ENCODE measurements at regions of chr19 and their contacts with region 1.

Region 1: GRCh38 chr19:40465557-40466150 is at the start of gene BLVRB:
- DNase-seq: peak; percentile 98 to 99 (median 99)
- H3K4me3 ChIP-seq: peak within 1 kb of the TSS; percentile 67 to 72
- H3K4me3 Mint-ChIP-seq: peak within 1 kb of the TSS; percentile 85 to 96 (median 86)
- H3K27ac ChIP-seq: peak within 1 kb of the TSS; percentile 52
- H3K27ac Mint-ChIP-seq: peak within 1 kb of the TSS; percentile 79 to 98 (median 95)
- H3K4me1 ChIP-seq: peaks cover 28% of the 10 kb centered on the region
- H3K4me1 Mint-ChIP-seq: peaks cover 22 to 31% (median 24%) of the 10 kb centered on the region in 4 donors
- H3K27me3 ChIP-seq: no peaks in the 10 kb centered on the region
- H3K27me3 Mint-ChIP-seq: peaks cover 6 to 20% of the 10 kb centered on the region in 2 donors
- total RNA-seq, gene BLVRB: 12.3 to 16.3 TPM

Region 2: DNA sequence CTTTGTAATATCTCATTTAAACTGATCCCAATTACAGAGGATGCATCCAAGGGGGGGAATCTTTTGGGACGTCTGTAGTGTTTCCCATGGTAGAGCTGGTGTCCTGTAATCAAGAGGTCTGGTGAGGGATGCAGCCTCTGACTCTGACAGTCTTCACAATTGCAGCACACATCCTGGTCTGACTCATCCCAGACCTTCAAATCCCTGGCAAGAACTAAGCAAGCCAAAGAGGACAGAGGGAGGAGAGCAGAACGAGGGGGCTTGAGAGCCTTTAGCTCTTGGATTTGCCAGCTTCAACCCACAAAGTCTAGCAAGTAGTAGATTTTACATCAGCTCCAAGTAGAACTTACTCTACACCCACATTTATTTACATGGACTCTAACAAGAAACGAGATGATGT is 514.0 kb before region 1 on chr19:
- CTCF ChIA-PET with region 1: no interaction called
- POLR2A ChIA-PET with region 1: no interaction called
- intact Hi-C with region 1: no loop called
- DNase-seq: no peak
- H3K4me3 ChIP-seq: peak overlapping the region in 1 of 2 donors; percentile 23
- H3K4me3 Mint-ChIP-seq: peak overlapping the region in 7 of 8 donors; percentile 65 to 93 (median 91)
- H3K27ac ChIP-seq: peak overlapping the region; percentile 57
- H3K27ac Mint-ChIP-seq: peak overlapping the region; percentile 88 to 99 (median 97)
- H3K4me1 ChIP-seq: peaks cover 83% of the 10 kb centered on the region
- H3K4me1 Mint-ChIP-seq: peaks cover 50 to 93% (median 69%) of the 10 kb centered on the region in 4 donors
- H3K27me3 ChIP-seq: no peaks in the 10 kb centered on the region
- H3K27me3 Mint-ChIP-seq: no peaks in the 10 kb centered on the region

Region 3: DNA sequence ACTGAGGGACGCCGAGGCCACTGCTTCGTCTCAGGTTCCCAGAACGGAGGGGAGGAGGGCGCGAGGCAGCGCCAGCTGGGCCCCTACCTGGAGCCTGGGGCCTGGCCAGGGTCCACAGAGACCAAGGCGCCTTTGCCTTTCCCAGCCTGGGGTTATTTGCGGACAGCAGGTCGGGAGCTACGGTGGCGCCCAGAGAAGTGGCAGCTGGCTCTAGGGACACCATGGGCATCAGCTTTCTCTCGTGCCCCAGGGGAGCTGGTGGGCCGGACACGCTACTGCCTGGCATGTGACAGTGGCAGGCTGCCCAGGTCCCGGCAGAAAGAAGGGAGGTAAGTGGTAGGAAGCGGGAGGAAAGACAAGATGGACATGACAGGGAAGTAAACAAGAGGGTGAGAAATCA is 199.5 kb before region 1 on chr19:
- CTCF ChIA-PET with region 1: no interaction called
- POLR2A ChIA-PET with region 1: no interaction called
- intact Hi-C with region 1: no loop called
- DNase-seq: no peak
- H3K4me3 ChIP-seq: no peak overlapping the region
- H3K4me3 Mint-ChIP-seq: no peak overlapping the region
- H3K27ac ChIP-seq: no peak overlapping the region
- H3K27ac Mint-ChIP-seq: no peak overlapping the region
- H3K4me1 ChIP-seq: no peaks in the 10 kb centered on the region
- H3K4me1 Mint-ChIP-seq: peaks cover 14 to 48% (median 27%) of the 10 kb centered on the region in 4 donors
- H3K27me3 ChIP-seq: no peaks in the 10 kb centered on the region
- H3K27me3 Mint-ChIP-seq: no peaks in the 10 kb centered on the region

Region 4: GRCh38 chr19:40403262-40403984 is 62.2 kb before region 1 on chr19:
- CTCF ChIA-PET with region 1: interaction called, 6 read pairs
- POLR2A ChIA-PET with region 1: interaction called, 17 read pairs
- intact Hi-C with region 1: loop called (anchors 5 kb)
- DNase-seq: peak; percentile 61 to 80 (median 64)
- H3K4me3 ChIP-seq: peak overlapping the region; percentile 59 to 69
- H3K4me3 Mint-ChIP-seq: peak overlapping the region; percentile 86 to 99 (median 96)
- H3K27ac ChIP-seq: peak overlapping the region; percentile 43
- H3K27ac Mint-ChIP-seq: peak overlapping the region; percentile 46 to 95 (median 90)
- H3K4me1 ChIP-seq: peaks cover 18% of the 10 kb centered on the region
- H3K4me1 Mint-ChIP-seq: peaks cover 22 to 38% (median 29%) of the 10 kb centered on the region in 4 donors
- H3K27me3 ChIP-seq: no peaks in the 10 kb centered on the region
- H3K27me3 Mint-ChIP-seq: no peaks in the 10 kb centered on the region

Region 5: GRCh38 chr19:40444192-40445028 is 21.2 kb before region 1 on chr19 and contains the start of gene SERTAD3:
- CTCF ChIA-PET with region 1: interaction called, 21 read pairs
- POLR2A ChIA-PET with region 1: interaction called, 51 read pairs
- intact Hi-C with region 1: loop called (anchors 1 kb)
- DNase-seq: peak; percentile 96 to 99 (median 97)
- H3K4me3 ChIP-seq: peak within 1 kb of the TSS; percentile 96 to 100
- H3K4me3 Mint-ChIP-seq: peak within 1 kb of the TSS; percentile 96 to 100 (median 100)
- H3K27ac ChIP-seq: peak within 1 kb of the TSS; percentile 75
- H3K27ac Mint-ChIP-seq: peak within 1 kb of the TSS; percentile 85 to 100 (median 99)
- H3K4me1 ChIP-seq: peaks cover 11% of the 10 kb centered on the region
- H3K4me1 Mint-ChIP-seq: peaks cover 11 to 22% (median 18%) of the 10 kb centered on the region in 4 donors
- H3K27me3 ChIP-seq: no peaks in the 10 kb centered on the region
- H3K27me3 Mint-ChIP-seq: no peaks in the 10 kb centered on the region
- total RNA-seq, gene SERTAD3: 17.8 to 19.4 TPM

Region 6: GRCh38 chr19:40529093-40529954 is 63.7 kb after region 1 on chr19:
- CTCF ChIA-PET with region 1: no interaction called
- POLR2A ChIA-PET with region 1: no interaction called
- intact Hi-C with region 1: loop called (anchors 2 kb)
- DNase-seq: peak; percentile 88 to 90 (median 89)
- H3K4me3 ChIP-seq: peak overlapping the region in 1 of 2 donors; percentile 54
- H3K4me3 Mint-ChIP-seq: peak overlapping the region; percentile 65 to 87 (median 78)
- H3K27ac ChIP-seq: no peak overlapping the region
- H3K27ac Mint-ChIP-seq: peak overlapping the region; percentile 53 to 93 (median 77)
- H3K4me1 ChIP-seq: peaks cover 14% of the 10 kb centered on the region
- H3K4me1 Mint-ChIP-seq: peaks cover 9 to 26% (median 15%) of the 10 kb centered on the region in 4 donors
- H3K27me3 ChIP-seq: peaks cover 9% of the 10 kb centered on the region
- H3K27me3 Mint-ChIP-seq: peaks cover 18 to 30% of the 10 kb centered on the region in 2 donors

Region 7: DNA sequence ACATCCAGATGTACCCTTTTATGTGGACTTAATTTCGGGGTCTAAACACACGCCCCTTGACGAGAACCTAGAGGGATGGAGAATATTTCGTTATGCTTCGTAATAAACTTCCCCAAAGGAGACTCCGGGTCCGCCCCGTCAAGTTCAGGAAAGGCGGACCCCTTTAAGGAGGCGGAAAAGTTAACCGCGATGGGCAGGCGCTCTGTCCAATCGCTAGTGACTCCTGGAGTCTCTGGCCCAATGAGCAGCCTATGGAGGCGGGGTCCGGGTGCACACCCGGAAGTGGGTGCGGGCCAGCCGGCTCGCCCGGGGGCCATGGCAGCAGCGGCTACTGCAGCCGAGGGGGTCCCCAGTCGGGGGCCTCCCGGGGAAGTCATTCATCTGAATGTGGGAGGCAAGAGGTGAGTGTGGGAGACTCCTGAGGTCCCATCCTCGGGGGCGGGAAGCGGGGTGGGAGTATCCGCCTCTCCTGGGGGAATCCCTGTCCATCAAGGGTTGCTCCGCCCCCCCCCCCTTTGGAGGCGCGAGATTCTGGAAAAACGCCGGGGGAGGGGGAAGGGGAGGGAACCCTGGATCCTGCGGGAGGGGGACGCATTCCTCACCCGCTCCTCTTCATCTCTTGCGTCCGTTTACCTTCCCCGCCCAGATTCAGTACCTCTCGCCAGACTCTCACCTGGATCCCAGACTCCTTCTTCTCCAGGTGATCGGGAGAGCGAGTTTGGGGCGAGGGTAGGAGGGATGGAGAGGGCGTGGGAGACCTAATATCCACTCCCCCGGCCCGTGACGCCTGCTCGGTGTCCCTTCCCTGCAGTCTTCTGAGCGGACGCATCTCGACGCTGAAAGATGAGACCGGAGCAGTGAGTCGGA is 111.2 kb after region 1 on chr19 and contains the start of gene SHKBP1:
- CTCF ChIA-PET with region 1: no interaction called
- POLR2A ChIA-PET with region 1: interaction called, 5 read pairs
- intact Hi-C with region 1: loop called (anchors 1 kb)
- DNase-seq: peak; percentile 91 to 94 (median 92)
- H3K4me3 ChIP-seq: peak within 1 kb of the TSS; percentile 73 to 74
- H3K4me3 Mint-ChIP-seq: peak within 1 kb of the TSS; percentile 83 to 94 (median 91)
- H3K27ac ChIP-seq: peak within 1 kb of the TSS; percentile 72
- H3K27ac Mint-ChIP-seq: peak within 1 kb of the TSS; percentile 87 to 96 (median 91)
- H3K4me1 ChIP-seq: peaks cover 23% of the 10 kb centered on the region
- H3K4me1 Mint-ChIP-seq: peaks cover 14 to 31% (median 23%) of the 10 kb centered on the region in 4 donors
- H3K27me3 ChIP-seq: no peaks in the 10 kb centered on the region
- H3K27me3 Mint-ChIP-seq: no peaks in the 10 kb centered on the region
- total RNA-seq, gene SHKBP1: 167 to 170 TPM

Region 8: DNA sequence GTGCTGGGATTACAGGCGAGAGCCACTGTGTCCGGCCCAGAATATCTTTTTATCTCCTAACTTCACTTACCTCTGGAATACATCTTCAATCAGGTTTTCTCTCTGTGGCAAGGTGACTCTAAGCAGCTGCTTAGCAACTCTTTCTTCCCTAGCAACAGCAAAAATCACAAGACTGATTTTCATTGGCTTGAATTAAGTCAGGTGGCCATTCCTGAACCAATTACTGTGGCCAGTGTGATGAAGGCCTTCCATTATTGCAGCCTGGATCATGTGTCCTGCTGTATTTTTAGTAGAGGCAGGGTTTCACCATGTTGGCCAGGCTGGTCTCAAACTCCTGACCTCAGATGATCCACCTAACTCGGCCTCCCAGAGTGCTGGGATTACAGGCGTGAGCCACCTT is 126.5 kb after region 1 on chr19:
- CTCF ChIA-PET with region 1: no interaction called
- POLR2A ChIA-PET with region 1: no interaction called
- intact Hi-C with region 1: no loop called
- DNase-seq: peak in 3 of 5 donors; percentile 30 to 48 (median 43)
- H3K4me3 ChIP-seq: no peak overlapping the region
- H3K4me3 Mint-ChIP-seq: no peak overlapping the region
- H3K27ac ChIP-seq: no peak overlapping the region
- H3K27ac Mint-ChIP-seq: peak overlapping the region in 5 of 7 donors; percentile 8 to 43 (median 22)
- H3K4me1 ChIP-seq: peaks cover 11% of the 10 kb centered on the region
- H3K4me1 Mint-ChIP-seq: peaks cover 8 to 12% (median 10%) of the 10 kb centered on the region in 4 donors
- H3K27me3 ChIP-seq: peaks cover under 1% of the 10 kb centered on the region
- H3K27me3 Mint-ChIP-seq: peaks cover 2% of the 10 kb centered on the region in 2 donors

Region 9: GRCh38 chr19:40633207-40633606 is 167.6 kb after region 1 on chr19:
- CTCF ChIA-PET with region 1: interaction called, 39 read pairs
- POLR2A ChIA-PET with region 1: interaction called, 3 read pairs
- intact Hi-C with region 1: loop called (anchors 1 kb)
- DNase-seq: no peak
- H3K4me3 ChIP-seq: no peak overlapping the region
- H3K4me3 Mint-ChIP-seq: no peak overlapping the region
- H3K27ac ChIP-seq: no peak overlapping the region
- H3K27ac Mint-ChIP-seq: no peak overlapping the region
- H3K4me1 ChIP-seq: peaks cover 6% of the 10 kb centered on the region
- H3K4me1 Mint-ChIP-seq: peaks cover 4 to 14% (median 7%) of the 10 kb centered on the region in 4 donors
- H3K27me3 ChIP-seq: no peaks in the 10 kb centered on the region
- H3K27me3 Mint-ChIP-seq: peaks cover 0 to 2% of the 10 kb centered on the region in 2 donors

Region 10: GRCh38 chr19:40862785-40863184 is 397.1 kb after region 1 on chr19:
- CTCF ChIA-PET with region 1: no interaction called
- POLR2A ChIA-PET with region 1: no interaction called
- intact Hi-C with region 1: no loop called
- DNase-seq: no peak
- H3K4me3 ChIP-seq: no peak overlapping the region
- H3K4me3 Mint-ChIP-seq: no peak overlapping the region
- H3K27ac ChIP-seq: no peak overlapping the region
- H3K27ac Mint-ChIP-seq: no peak overlapping the region
- H3K4me1 ChIP-seq: no peaks in the 10 kb centered on the region
- H3K4me1 Mint-ChIP-seq: no peaks in the 10 kb centered on the region
- H3K27me3 ChIP-seq: no peaks in the 10 kb centered on the region
- H3K27me3 Mint-ChIP-seq: peaks cover 6 to 10% of the 10 kb centered on the region in 2 donors